ENCODE measurements at regions of chr7 and their contacts with region 1.

Region 1: GRCh38 chr7:106056513-106057203 is 55.5 kb downstream of the SYPL1 start:
- DNase-seq: peak; percentile 49 to 79 (median 59)
- H3K4me3 ChIP-seq: no peak overlapping the region
- H3K4me3 Mint-ChIP-seq: peak overlapping the region in 1 of 7 donors; percentile 24
- H3K27ac ChIP-seq: no peak overlapping the region
- H3K27ac Mint-ChIP-seq: peak overlapping the region in 1 of 8 donors; percentile 31
- H3K4me1 ChIP-seq: peaks cover 14% of the 10 kb centered on the region
- H3K4me1 Mint-ChIP-seq: peaks cover 18 to 22% (median 21%) of the 10 kb centered on the region in 3 donors
- H3K27me3 ChIP-seq: no peaks in the 10 kb centered on the region
- H3K27me3 Mint-ChIP-seq: no peaks in the 10 kb centered on the region

Region 2: GRCh38 chr7:105896407-105896911 is 160.2 kb before region 1 on chr7:
- CTCF ChIA-PET with region 1: no interaction called
- POLR2A ChIA-PET with region 1: no interaction called
- DNase-seq: no peak
- H3K4me3 ChIP-seq: no peak overlapping the region
- H3K4me3 Mint-ChIP-seq: no peak overlapping the region
- H3K27ac ChIP-seq: no peak overlapping the region
- H3K27ac Mint-ChIP-seq: peak overlapping the region in 1 of 8 donors; percentile 31
- H3K4me1 ChIP-seq: peaks cover 7% of the 10 kb centered on the region
- H3K4me1 Mint-ChIP-seq: peaks cover 13 to 42% (median 32%) of the 10 kb centered on the region in 3 donors
- H3K27me3 ChIP-seq: no peaks in the 10 kb centered on the region
- H3K27me3 Mint-ChIP-seq: no peaks in the 10 kb centered on the region

Region 3: DNA sequence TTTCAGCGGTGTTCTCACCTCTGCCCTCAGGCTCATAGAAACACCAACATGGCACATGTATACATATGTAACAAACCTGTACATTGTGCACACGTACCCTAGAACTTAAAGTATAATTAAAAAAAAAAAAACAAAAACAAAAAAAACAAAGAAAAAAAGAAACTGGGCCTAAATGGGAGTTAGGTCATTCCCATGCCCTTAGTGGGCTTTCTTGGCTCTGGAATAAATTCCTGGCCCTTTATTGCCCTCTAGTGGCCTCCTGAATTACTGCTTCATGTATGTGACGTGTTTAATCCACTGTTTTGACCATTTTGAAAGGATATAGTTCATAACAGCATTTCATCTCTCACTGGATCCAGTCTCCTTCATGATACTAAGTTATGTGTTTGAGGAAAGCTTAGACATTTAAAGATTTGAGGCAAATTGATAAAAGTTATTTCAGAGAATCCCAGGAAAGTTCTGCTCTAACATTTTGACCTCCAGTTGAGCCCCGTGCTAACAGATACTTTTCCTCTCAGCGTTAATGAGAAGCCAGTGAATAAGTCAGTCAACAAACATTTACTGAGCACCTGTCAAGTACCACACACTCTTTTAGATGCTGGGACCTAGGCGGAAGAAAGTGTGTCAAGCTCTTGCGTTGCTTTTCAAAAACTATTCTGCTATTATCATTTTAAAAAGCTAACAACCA is 110.1 kb after region 1 on chr7:
- CTCF ChIA-PET with region 1: interaction called, 32 read pairs
- POLR2A ChIA-PET with region 1: no interaction called
- DNase-seq: peak in 3 of 5 donors; percentile 10 to 34 (median 12)
- H3K4me3 ChIP-seq: no peak overlapping the region
- H3K4me3 Mint-ChIP-seq: no peak overlapping the region
- H3K27ac ChIP-seq: no peak overlapping the region
- H3K27ac Mint-ChIP-seq: peak overlapping the region in 1 of 8 donors; percentile 54
- H3K4me1 ChIP-seq: no peaks in the 10 kb centered on the region
- H3K4me1 Mint-ChIP-seq: peaks cover 0 to 4% (median 0%) of the 10 kb centered on the region in 3 donors
- H3K27me3 ChIP-seq: no peaks in the 10 kb centered on the region
- H3K27me3 Mint-ChIP-seq: peaks cover 5 to 30% of the 10 kb centered on the region in 2 donors